GM12878 (cell line): ENCODE measurements at regions of chr5 and their contacts with region 1.

Region 1: GRCh38 chr5:94745786-94746730 is 127.6 kb downstream of the SLF1 start:
- DNase-seq: peak; percentile 56
- ATAC-seq: peak; percentile 83
- H3K4me3 ChIP-seq: no peak overlapping the region
- H3K27ac ChIP-seq: peak overlapping the region; percentile 70
- H3K4me1 ChIP-seq: peaks cover 29% of the 10 kb centered on the region
- H3K27me3 ChIP-seq: no peaks in the 10 kb centered on the region
- CTCF ChIP-seq: no peak
- EP300 ChIP-seq: peak; percentile 88 to 96
- POLR2A ChIP-seq: no peak
- RAD21 ChIP-seq: no peak

Region 2: GRCh38 chr5:94700592-94700991 is 45.5 kb before region 1 on chr5:
- CTCF ChIA-PET with region 1: interaction called, 4 read pairs
- POLR2A ChIA-PET with region 1: interaction called, 6 read pairs
- RAD21 ChIA-PET with region 1: interaction called, 11 read pairs
- SMC1A ChIA-PET with region 1: interaction called, 12 read pairs
- in situ Hi-C with region 1: no loop called
- intact Hi-C with region 1: loop called (anchors 1 kb)
- DNase-seq: peak; percentile 33
- ATAC-seq: peak; percentile 82
- H3K4me3 ChIP-seq: no peak overlapping the region
- H3K27ac ChIP-seq: peak overlapping the region; percentile 18; the same call in 1 of the 2 replicates
- H3K4me1 ChIP-seq: peaks cover 19% of the 10 kb centered on the region; the same call in 1 of the 2 replicates
- H3K27me3 ChIP-seq: no peaks in the 10 kb centered on the region
- CTCF ChIP-seq: no peak
- EP300 ChIP-seq: peak in 1 of 2 experiments; percentile 48; a peak in 2 of 4 replicates
- POLR2A ChIP-seq: no peak
- RAD21 ChIP-seq: no peak

Region 3: DNA sequence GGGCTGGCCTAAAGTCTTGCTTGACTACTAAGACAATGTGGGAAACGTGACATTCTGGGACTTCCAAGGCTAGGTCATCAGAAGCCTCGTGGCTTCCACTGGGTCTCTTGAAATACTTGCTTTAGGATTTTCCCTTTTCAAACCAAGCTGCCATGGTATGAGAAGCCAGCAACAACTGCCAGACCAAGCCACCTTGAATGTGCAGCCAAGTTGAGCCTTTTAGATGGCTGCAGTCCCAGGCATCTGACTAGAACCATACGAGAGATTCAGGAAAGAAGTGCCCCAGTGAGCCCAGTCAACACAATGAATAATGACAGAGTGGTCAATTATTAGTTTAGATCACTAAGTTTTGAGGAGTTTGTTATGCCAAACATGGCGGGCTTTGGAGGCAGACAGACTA is 15.7 kb after region 1 on chr5:
- CTCF ChIA-PET with region 1: interaction called, 11 read pairs
- POLR2A ChIA-PET with region 1: interaction called, 4 read pairs
- RAD21 ChIA-PET with region 1: interaction called, 3 read pairs
- SMC1A ChIA-PET with region 1: interaction called, 13 read pairs
- in situ Hi-C with region 1: no loop called
- intact Hi-C with region 1: no loop called
- DNase-seq: no peak
- ATAC-seq: no peak
- H3K4me3 ChIP-seq: no peak overlapping the region
- H3K27ac ChIP-seq: no peak overlapping the region
- H3K4me1 ChIP-seq: no peaks in the 10 kb centered on the region
- H3K27me3 ChIP-seq: no peaks in the 10 kb centered on the region
- CTCF ChIP-seq: no peak
- EP300 ChIP-seq: no peak
- POLR2A ChIP-seq: no peak
- RAD21 ChIP-seq: no peak

Region 4: DNA sequence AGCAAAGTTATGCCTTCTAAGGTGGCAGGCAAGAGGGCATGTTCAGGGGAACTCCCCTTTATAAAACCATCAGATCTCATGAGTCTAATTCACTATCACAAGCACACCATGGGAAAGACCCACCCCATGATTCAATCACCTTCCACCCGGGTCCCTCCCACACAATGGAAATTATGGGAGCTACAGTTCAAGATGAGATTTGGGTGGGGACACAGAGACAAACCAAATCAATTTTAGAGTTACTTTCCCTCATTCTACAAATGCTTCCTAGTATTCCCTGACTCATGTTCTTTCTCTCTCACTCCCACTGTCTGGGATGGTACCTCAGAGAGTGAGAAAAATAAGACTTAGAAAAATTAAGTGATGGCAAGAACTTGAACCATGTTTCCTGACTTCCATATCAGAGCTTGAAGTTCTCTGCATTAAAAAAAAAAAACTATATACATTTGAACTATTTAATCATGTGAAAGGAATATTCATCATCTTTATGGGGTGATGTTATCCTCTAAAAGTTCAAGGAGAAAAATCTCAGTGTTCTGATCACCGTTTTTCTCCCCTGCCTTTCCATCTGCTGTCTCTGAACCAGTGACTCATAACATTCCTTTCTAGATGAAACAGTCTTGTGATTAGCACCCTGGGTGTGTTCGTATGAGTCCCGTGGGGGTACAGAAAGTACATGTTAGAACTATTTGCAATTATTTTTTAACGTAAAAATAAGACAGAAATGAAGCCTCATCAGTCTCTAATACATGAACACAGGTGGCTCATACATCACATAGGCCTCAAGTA is 155.3 kb after region 1 on chr5:
- CTCF ChIA-PET with region 1: no interaction called
- POLR2A ChIA-PET with region 1: no interaction called
- RAD21 ChIA-PET with region 1: no interaction called
- SMC1A ChIA-PET with region 1: interaction called, 3 read pairs
- in situ Hi-C with region 1: no loop called
- intact Hi-C with region 1: loop called (anchors 5 kb)
- DNase-seq: peak; percentile 23
- ATAC-seq: peak; percentile 92
- H3K4me3 ChIP-seq: no peak overlapping the region
- H3K27ac ChIP-seq: no peak overlapping the region
- H3K4me1 ChIP-seq: no peaks in the 10 kb centered on the region
- H3K27me3 ChIP-seq: no peaks in the 10 kb centered on the region
- CTCF ChIP-seq: no peak
- EP300 ChIP-seq: peak in 1 of 2 experiments; percentile 62; a peak in 1 of 4 replicates
- POLR2A ChIP-seq: no peak
- RAD21 ChIP-seq: no peak